ENCODE measurements at regions of chr7 and their contacts with region 1.

Region 1: DNA sequence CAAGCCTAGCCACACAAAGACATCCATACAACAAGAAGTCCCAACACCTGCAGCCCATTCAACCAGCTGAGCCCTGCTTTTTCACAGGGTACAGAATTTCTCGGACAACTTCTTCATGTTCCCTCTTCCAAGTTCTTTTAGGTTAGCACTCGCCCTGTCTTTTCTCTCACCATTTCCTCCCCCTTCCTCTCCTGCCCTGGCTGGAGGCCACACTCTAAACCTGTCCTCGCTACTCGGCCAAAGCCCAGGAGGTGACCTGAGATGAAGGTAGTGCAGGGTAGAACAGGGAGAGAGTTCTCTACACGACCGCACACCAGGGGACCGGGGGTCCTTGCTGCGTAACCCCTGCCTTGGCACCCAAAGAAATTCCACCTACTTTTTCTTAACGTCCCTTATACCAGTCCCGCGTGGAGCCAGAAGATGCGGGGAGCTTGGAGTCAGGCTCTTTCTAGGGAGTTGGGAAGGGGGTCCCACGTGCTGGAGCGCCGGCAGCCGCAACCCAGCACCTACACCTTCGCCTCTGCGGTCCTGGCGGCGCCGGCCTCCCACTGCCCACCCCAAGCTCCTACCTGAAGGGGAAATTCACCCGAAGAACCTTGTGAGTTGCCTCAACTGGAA is 16.0 kb upstream of the DLX6 start:
- DNase-seq: peak in 1 of 2 experiments; percentile 65
- H3K4me3 ChIP-seq: peak overlapping the region; percentile 1 to 39 (median 8); a peak in 5 of 8 replicates
- H3K27ac ChIP-seq: no peak overlapping the region
- H3K4me1 ChIP-seq: peaks cover 14 to 30% (median 16%) of the 10 kb centered on the region in 4 experiments
- H3K27me3 ChIP-seq: peaks cover 47 to 80% (median 68%) of the 10 kb centered on the region in 4 experiments
- CTCF ChIP-seq: no peak
- EP300 ChIP-seq: no peak
- POLR2A ChIP-seq: no peak
- RAD21 ChIP-seq: no peak

Region 2: GRCh38 chr7:97006036-97006815 is 16.9 kb after region 1 on chr7:
- CTCF ChIA-PET with region 1: interaction called, 11 read pairs
- POLR2A ChIA-PET with region 1: interaction called, 16 read pairs
- DNase-seq: peak in 1 of 2 experiments; percentile 85
- H3K4me3 ChIP-seq: peak overlapping the region; percentile 26 to 58 (median 50)
- H3K27ac ChIP-seq: no peak overlapping the region
- H3K4me1 ChIP-seq: peaks cover 9 to 27% (median 18%) of the 10 kb centered on the region in 4 experiments
- H3K27me3 ChIP-seq: peaks cover 73 to 95% (median 88%) of the 10 kb centered on the region in 4 experiments
- CTCF ChIP-seq: 0 out of 4 replicates have a peak, but pooled peaks of 1 of the 3 experiments have one; percentile 4
- EP300 ChIP-seq: 0 out of 3 replicates have a peak, but pooled peaks of 1 of the 2 experiments have one; percentile 38
- POLR2A ChIP-seq: no peak
- RAD21 ChIP-seq: no peak

Region 3: GRCh38 chr7:97016381-97017191 is 27.2 kb after region 1 on chr7:
- CTCF ChIA-PET with region 1: interaction called, 150 read pairs
- POLR2A ChIA-PET with region 1: interaction called, 8 read pairs
- DNase-seq: peak in 1 of 2 experiments; percentile 84
- H3K4me3 ChIP-seq: peak overlapping the region; percentile 22 to 52 (median 33); a peak in 6 of 8 replicates
- H3K27ac ChIP-seq: no peak overlapping the region
- H3K4me1 ChIP-seq: peaks cover 0 to 20% (median 13%) of the 10 kb centered on the region in 4 experiments; a peak in 5 of 7 replicates
- H3K27me3 ChIP-seq: peaks cover 94 to 100% (median 99%) of the 10 kb centered on the region in 4 experiments
- CTCF ChIP-seq: peak; percentile 51 to 57 (median 52)
- EP300 ChIP-seq: no peak
- POLR2A ChIP-seq: no peak
- RAD21 ChIP-seq: peak; percentile 62 to 70

Region 4: DNA sequence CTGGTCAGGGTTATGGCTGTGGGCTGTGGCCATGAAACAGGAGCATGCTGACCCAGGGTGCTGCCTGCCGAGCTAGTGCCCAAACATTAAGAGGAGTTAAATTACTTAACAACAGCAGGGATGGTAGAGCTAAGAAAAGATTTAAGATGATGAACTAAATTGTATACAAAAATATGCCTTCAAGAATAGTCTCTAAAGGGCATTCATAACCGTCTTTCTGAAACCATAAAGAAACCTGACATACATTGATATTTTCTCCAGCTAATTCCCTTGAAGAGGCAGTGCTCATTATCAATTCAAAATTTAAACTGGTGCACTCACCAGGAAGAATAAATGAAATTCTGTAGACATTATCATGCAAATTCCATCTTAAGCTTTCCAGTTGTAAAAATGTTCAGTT is 476.7 kb after region 1 on chr7:
- CTCF ChIA-PET with region 1: no interaction called
- POLR2A ChIA-PET with region 1: no interaction called
- DNase-seq: no peak
- H3K4me3 ChIP-seq: no peak overlapping the region
- H3K27ac ChIP-seq: no peak overlapping the region
- H3K4me1 ChIP-seq: no peaks in the 10 kb centered on the region
- H3K27me3 ChIP-seq: no peaks in the 10 kb centered on the region
- CTCF ChIP-seq: no peak
- EP300 ChIP-seq: no peak
- POLR2A ChIP-seq: no peak
- RAD21 ChIP-seq: no peak

Measured in H1 (cell line).